ENCODE measurements at regions of chr6 and their contacts with region 1.

Region 1: DNA sequence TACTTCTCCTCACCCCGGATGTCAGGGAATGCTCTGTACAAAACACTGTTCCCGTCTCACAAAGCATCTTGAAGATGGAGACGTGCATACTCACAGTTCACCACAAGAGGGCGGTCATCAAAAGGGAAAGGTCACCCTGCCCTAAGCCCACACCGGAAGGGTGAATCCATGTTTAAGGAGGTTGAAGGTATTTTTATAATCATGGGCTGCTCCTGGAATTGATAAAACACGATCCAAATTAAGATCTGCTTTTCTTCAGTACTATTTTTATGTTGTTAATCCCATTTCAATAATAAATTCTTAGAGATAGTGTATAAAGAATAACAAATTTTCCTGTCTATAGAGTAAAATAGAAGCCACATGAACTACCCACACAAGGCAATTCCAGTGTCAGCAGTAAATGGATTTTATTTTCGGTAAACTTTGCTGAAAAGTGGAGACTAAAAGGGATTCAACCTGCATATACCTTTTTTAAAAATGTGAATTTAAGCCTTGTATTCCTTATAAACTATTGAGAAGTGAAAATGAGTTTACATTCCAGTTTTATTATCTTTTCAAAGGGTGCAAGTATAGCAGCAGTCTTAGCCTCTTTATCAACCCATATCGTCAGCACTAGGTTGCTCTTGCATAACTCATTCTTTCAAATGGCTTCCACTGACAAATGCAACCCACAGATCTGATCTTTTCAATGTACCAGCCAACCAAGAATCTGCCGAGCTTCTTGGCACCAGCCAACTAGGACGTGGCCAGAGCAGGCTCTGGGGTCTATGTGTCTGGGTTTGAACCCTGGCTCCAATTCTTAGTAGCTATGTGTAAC is 79.7 kb upstream of the MBOAT1 start:
- DNase-seq: peak; percentile 85
- H3K4me3 Mint-ChIP-seq: no peak overlapping the region
- H3K27ac Mint-ChIP-seq: no peak overlapping the region
- H3K4me1 Mint-ChIP-seq: peaks cover 7% of the 10 kb centered on the region
- H3K27me3 Mint-ChIP-seq: no peaks in the 10 kb centered on the region

Region 2: GRCh38 chr6:20135677-20136268 is 156.2 kb before region 1 on chr6:
- CTCF ChIA-PET with region 1: no interaction called
- POLR2A ChIA-PET with region 1: no interaction called
- intact Hi-C with region 1: no loop called
- DNase-seq: no peak
- H3K4me3 Mint-ChIP-seq: no peak overlapping the region
- H3K27ac Mint-ChIP-seq: no peak overlapping the region
- H3K4me1 Mint-ChIP-seq: no peaks in the 10 kb centered on the region
- H3K27me3 Mint-ChIP-seq: no peaks in the 10 kb centered on the region

Region 3: GRCh38 chr6:20534295-20535262 is 242.6 kb after region 1 on chr6 and contains the start of gene CDKAL1:
- CTCF ChIA-PET with region 1: interaction called, 30 read pairs
- POLR2A ChIA-PET with region 1: no interaction called
- intact Hi-C with region 1: no loop called
- DNase-seq: peak; percentile 96
- H3K4me3 Mint-ChIP-seq: peak within 1 kb of the TSS; percentile 99
- H3K27ac Mint-ChIP-seq: peak within 1 kb of the TSS; percentile 97
- H3K4me1 Mint-ChIP-seq: peaks cover 34% of the 10 kb centered on the region
- H3K27me3 Mint-ChIP-seq: peaks cover 3% of the 10 kb centered on the region
- total RNA-seq, gene CDKAL1: 23.1 to 23.2 TPM